ENCODE measurements at regions of chr11 and their contacts with region 1.

Region 1: DNA sequence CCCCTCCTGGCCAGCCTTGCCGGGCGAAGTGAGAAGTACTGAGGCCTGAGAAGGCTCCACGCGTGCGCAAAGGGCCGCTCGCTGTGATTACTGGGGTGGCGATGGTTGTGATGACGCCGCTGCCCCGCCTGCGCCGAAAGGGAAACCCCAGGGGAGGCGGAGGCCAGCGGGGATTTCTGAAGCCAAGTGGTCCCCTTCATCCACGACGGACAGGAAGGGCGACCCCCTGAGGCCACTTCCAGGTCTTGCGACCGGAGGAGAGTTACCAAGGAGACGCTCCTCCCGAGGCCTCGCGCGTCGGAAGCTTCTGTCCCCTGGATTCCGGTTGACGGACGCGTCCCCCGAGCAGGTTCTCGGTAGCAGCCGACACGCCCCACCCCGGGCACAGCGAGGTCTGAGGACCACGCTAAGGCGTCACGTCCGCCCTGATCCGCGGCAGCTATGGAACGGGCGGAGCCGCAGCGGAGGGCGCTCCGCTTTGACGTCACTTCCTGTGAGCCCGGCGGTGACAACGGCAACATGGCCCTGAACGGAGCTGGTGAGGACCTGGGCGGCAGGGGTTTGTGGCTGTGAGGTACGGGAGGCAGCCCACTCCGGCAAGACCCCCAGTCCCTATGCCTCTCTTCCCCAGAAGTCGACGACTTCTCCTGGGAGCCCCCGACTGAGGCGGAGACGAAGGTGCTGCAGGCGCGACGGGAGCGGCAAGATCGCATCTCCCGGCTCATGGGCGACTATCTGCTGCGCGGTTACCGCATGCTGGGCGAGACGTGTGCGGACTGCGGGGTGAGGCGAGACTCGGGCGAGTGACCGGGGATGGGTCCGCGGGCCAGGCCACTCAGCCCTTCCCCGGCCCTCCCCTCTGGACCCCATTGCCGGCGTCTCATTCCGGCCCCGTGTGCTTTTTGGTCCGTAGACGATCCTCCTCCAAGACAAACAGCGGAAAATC is at the start of gene ZNRD2:
- DNase-seq: peak; percentile 99
- ATAC-seq: peak; percentile 77
- H3K4me3 Mint-ChIP-seq: peak within 1 kb of the TSS; percentile 93
- H3K27ac Mint-ChIP-seq: peak within 1 kb of the TSS; percentile 97
- H3K4me1 Mint-ChIP-seq: peaks cover 57% of the 10 kb centered on the region
- H3K27me3 Mint-ChIP-seq: no peaks in the 10 kb centered on the region
- CTCF ChIP-seq: peak; percentile 27
- total RNA-seq, gene ZNRD2: 54.3 to 54.7 TPM

Region 2: DNA sequence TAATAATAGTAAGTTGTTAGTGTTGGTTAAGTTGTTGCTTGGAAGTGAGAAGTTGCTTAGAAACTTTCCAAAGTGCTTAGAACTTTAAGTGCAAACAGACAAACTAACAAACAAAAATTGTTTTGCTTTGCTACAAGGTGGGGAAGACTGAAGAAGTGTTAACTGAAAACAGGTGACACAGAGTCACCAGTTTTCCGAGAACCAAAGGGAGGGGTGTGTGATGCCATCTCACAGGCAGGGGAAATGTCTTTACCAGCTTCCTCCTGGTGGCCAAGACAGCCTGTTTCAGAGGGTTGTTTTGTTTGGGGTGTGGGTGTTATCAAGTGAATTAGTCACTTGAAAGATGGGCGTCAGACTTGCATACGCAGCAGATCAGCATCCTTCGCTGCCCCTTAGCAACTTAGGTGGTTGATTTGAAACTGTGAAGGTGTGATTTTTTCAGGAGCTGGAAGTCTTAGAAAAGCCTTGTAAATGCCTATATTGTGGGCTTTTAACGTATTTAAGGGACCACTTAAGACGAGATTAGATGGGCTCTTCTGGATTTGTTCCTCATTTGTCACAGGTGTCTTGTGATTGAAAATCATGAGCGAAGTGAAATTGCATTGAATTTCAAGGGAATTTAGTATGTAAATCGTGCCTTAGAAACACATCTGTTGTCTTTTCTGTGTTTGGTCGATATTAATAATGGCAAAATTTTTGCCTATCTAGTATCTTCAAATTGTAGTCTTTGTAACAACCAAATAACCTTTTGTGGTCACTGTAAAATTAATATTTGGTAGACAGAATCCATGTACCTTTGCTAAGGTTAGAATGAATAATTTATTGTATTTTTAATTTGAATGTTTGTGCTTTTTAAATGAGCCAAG is 144.9 kb before region 1 on chr11:
- CTCF ChIA-PET with region 1: no interaction called
- POLR2A ChIA-PET with region 1: interaction called, 44 read pairs
- intact Hi-C with region 1: loop called (anchors 5 kb)
- DNase-seq: peak; percentile 90
- ATAC-seq: peak; percentile 32
- H3K4me3 Mint-ChIP-seq: peak overlapping the region; percentile 89
- H3K27ac Mint-ChIP-seq: peak overlapping the region; percentile 98
- H3K4me1 Mint-ChIP-seq: peaks cover 41% of the 10 kb centered on the region
- H3K27me3 Mint-ChIP-seq: peaks cover 8% of the 10 kb centered on the region
- CTCF ChIP-seq: no peak

Region 3: GRCh38 chr11:65546217-65546958 is 23.9 kb before region 1 on chr11:
- CTCF ChIA-PET with region 1: interaction called, 59 read pairs
- POLR2A ChIA-PET with region 1: interaction called, 25 read pairs
- intact Hi-C with region 1: loop called (anchors 5 kb)
- DNase-seq: peak; percentile 98
- ATAC-seq: peak; percentile 90
- H3K4me3 Mint-ChIP-seq: peak overlapping the region; percentile 71
- H3K27ac Mint-ChIP-seq: peak overlapping the region; percentile 84
- H3K4me1 Mint-ChIP-seq: peaks cover 52% of the 10 kb centered on the region
- H3K27me3 Mint-ChIP-seq: no peaks in the 10 kb centered on the region
- CTCF ChIP-seq: no peak

Region 4: DNA sequence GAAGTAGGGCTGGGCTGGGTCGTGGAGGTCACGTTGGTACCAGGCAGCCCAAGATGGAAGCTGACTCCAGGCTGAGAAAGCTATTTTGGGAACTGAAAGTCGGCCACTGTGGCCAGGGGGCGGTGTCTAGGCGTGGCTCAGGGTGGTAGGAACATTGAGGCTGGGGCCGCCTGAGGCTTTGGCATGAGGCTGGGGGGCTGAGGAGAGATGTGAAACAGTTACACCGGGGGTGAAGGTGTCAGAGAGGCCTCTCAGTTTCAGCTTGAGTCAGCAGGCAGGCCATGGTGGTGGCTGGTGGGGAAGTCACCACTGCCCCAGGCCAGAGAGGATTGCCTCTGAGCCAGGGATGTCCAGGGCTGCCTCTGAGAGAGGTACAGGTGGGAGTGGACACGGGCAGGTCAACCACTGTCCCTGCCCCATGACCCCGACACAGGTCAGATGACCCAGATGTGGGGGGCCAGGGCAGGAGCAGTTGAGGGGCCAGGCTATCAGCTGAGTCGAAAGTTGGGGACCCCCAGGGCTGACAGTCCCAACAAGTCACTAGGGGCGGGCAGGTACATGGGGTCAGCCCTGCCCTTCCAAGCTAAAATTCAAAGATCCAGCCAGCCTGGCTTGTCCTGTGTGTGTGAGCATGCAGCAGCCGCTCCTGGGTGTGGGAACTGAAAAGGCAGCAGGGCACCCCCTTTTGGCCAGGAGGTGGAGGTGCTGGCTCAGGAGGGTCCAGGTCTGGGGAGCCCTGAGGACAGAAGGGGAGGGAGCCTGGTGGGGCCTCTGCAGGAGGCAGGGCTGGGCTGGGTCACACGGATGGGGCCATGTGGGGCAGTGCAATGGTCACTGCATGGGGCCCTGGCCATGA is 18.2 kb after region 1 on chr11:
- CTCF ChIA-PET with region 1: interaction called, 84 read pairs
- POLR2A ChIA-PET with region 1: interaction called, 87 read pairs
- intact Hi-C with region 1: loop called (anchors 2 kb)
- DNase-seq: peak; percentile 93
- ATAC-seq: peak; percentile 76
- H3K4me3 Mint-ChIP-seq: peak overlapping the region; percentile 36
- H3K27ac Mint-ChIP-seq: peak overlapping the region; percentile 94
- H3K4me1 Mint-ChIP-seq: peaks cover 40% of the 10 kb centered on the region
- H3K27me3 Mint-ChIP-seq: no peaks in the 10 kb centered on the region
- CTCF ChIP-seq: peak; percentile 75

Region 5: DNA sequence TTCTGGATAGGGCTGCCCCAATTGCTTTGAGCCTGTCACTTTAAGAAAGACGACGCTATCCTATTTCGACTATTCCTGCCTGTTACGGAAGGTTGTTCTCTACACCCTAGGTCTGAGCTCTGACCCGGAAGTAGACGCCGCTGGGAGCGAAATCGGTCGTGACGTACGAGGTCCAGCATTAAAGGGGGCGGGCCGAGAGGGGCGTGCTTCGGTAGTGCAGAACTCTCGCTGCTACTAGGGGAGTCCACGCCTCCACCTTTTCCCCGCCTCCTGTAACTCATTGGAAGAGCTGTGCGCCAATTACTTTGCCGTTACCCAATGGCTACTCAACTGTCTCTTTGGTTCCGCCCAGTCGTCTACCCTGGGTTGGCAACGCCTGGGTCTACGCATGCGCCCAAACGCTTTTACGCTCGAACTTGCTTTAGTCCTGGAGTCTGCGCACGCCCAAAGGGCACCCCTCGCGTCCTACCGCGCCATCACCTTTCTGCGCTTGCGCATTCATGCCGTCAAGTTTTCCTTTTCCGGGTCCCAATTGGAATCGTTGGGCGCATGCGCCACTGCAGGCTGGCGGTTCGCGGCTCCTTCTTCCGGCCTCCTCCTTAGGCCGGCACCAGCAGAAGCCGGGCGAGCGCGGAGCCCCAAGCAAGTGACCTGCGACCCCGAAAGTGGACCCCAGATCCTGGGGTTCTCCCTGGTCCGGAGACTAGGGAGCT is 45.1 kb after region 1 on chr11 and contains the start of gene PCNX3:
- CTCF ChIA-PET with region 1: interaction called, 25 read pairs
- POLR2A ChIA-PET with region 1: interaction called, 8 read pairs
- intact Hi-C with region 1: loop called (anchors 2 kb)
- DNase-seq: peak; percentile 100
- ATAC-seq: peak; percentile 90
- H3K4me3 Mint-ChIP-seq: peak within 1 kb of the TSS; percentile 93
- H3K27ac Mint-ChIP-seq: peak within 1 kb of the TSS; percentile 97
- H3K4me1 Mint-ChIP-seq: peaks cover 45% of the 10 kb centered on the region
- H3K27me3 Mint-ChIP-seq: no peaks in the 10 kb centered on the region
- CTCF ChIP-seq: no peak
- total RNA-seq, gene PCNX3: 34.3 to 34.4 TPM

Region 6: DNA sequence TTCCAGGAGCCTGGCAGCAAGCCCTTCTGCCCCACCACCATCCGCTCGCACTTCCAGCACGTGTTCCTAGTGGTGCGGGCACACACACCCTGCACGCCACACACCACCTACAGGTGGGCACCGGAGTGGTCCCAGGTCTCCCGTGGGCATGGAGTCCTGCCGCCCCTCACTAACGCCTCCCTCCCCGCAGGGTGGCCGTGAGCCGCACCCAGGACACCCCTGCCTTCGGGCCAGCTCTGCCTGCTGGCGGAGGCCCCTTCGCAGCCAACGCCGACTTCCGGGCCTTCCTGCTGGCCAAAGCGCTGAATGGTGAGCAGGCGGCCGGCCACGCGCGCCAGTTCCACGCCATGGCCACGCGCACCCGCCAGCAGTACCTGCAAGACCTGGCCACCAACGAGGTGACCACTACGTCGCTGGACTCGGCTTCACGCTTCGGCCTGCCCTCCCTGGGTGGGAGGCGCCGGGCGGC is 76.1 kb after region 1 on chr11:
- CTCF ChIA-PET with region 1: no interaction called
- POLR2A ChIA-PET with region 1: no interaction called
- intact Hi-C with region 1: no loop called
- DNase-seq: no peak
- ATAC-seq: no peak
- H3K4me3 Mint-ChIP-seq: no peak overlapping the region
- H3K27ac Mint-ChIP-seq: no peak overlapping the region
- H3K4me1 Mint-ChIP-seq: peaks cover 28% of the 10 kb centered on the region
- H3K27me3 Mint-ChIP-seq: no peaks in the 10 kb centered on the region
- CTCF ChIP-seq: no peak

Region 7: GRCh38 chr11:65658174-65659021 is 88.2 kb after region 1 on chr11:
- CTCF ChIA-PET with region 1: no interaction called
- POLR2A ChIA-PET with region 1: no interaction called
- intact Hi-C with region 1: no loop called
- DNase-seq: no peak
- ATAC-seq: no peak
- H3K4me3 Mint-ChIP-seq: no peak overlapping the region
- H3K27ac Mint-ChIP-seq: peak overlapping the region; percentile 75
- H3K4me1 Mint-ChIP-seq: peaks cover 51% of the 10 kb centered on the region
- H3K27me3 Mint-ChIP-seq: no peaks in the 10 kb centered on the region
- CTCF ChIP-seq: no peak

Region 8: GRCh38 chr11:65680192-65680743 is 110.0 kb after region 1 on chr11:
- CTCF ChIA-PET with region 1: no interaction called
- POLR2A ChIA-PET with region 1: no interaction called
- intact Hi-C with region 1: no loop called
- DNase-seq: no peak
- ATAC-seq: no peak
- H3K4me3 Mint-ChIP-seq: no peak overlapping the region
- H3K27ac Mint-ChIP-seq: no peak overlapping the region
- H3K4me1 Mint-ChIP-seq: no peaks in the 10 kb centered on the region
- H3K27me3 Mint-ChIP-seq: peaks cover 2% of the 10 kb centered on the region
- CTCF ChIP-seq: no peak

Measured in activated CD8-positive, alpha-beta T cell treated with anti-CD3 and anti-CD28 coated beads for 36 hours (primary cell).